Esophagus muscularis mucosa (tissue), 4 donors: ENCODE measurements at regions of chr22 and their contacts with region 1.

Region 1: DNA sequence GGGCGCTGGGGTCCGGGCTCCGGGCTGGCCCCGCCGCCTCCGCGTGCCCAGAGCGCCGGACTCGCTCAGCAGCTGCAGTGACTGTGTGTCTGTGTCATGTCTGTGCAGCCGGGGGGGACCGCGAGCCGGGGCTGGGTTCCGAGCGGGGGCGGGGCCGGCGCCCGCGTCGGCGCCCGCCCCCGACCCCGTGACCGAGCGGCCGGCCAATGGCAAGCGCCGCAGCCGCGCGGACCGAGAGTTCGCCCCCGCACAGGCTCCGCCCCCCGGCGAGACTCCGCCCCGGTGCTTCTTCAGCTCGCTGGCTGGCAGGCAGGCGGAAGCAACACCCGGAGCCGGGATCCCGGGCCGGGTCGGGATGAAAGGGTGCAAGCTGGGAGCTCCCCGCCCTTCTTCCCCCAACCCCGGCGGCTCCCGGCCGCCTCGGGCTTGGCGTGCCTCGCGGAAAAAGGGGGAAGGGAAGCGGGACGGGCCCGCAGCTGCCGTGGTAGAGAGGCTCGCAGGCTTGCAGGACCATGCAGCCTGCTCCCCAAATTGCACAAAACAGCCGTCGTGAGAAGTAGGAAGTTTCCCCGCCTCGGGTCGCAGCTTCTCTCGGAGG is 750 bp upstream of the LARGE1 start:
- DNase-seq: peak; percentile 99
- H3K4me3 ChIP-seq: peak overlapping the region; percentile 70 to 95 (median 85)
- H3K27ac ChIP-seq: peak overlapping the region; percentile 88 to 92 (median 90)
- H3K4me1 ChIP-seq: peaks cover 25 to 53% (median 42%) of the 10 kb centered on the region in 4 donors
- H3K27me3 ChIP-seq: no peaks in the 10 kb centered on the region
- CTCF ChIP-seq: no peak
- EP300 ChIP-seq: no peak
- POLR2A ChIP-seq: no peak

Region 2: DNA sequence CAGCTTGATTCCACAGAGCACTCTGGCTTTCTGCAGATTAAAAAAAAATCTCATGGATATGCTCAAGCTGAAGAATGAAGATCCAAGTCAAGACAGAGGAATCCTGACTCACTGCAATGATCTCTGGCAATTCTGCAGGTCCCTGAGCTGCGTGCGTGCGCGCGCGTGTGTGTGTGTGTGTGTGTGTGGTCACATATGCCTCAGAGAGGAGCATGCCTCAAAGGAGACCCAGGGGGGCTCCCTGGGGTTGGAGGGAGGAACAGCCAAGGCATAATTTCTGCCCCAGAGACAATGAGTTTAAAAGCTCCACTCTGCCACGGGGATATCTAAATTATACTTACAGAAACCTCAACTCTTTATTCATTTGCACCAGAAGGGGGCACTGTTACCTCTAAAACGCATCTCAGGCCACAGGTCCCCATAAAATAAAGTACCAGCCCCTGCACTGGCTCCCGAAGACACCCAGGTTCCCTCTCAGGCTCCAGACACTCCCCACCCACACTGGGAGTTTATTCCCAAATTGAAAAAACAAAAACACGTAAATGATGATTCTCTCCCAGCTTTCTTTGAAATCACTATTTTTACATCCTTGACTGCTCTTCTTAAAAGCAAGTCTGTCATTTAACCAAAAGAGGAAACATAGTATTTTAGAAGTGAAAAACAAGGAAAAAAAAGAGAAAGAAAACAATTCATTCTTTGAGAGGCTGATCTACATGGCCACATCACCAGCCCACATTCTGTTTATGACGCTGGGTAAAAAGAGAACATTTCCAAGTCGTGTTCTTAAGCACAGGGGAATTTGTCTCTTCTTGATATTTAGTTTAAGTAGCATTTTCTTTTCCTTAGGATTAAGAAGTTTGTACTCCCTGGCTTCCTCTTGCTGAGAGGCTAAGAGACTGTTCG is 401.7 kb before region 1 on chr22:
- intact Hi-C with region 1: loop called (anchors 5 kb)
- DNase-seq: no peak
- H3K4me3 ChIP-seq: no peak overlapping the region
- H3K27ac ChIP-seq: no peak overlapping the region
- H3K4me1 ChIP-seq: peaks cover 11 to 16% (median 12%) of the 10 kb centered on the region in 4 donors
- H3K27me3 ChIP-seq: no peaks in the 10 kb centered on the region
- CTCF ChIP-seq: peak; percentile 61 to 63 (median 62)
- EP300 ChIP-seq: no peak
- POLR2A ChIP-seq: no peak

Region 3: GRCh38 chr22:33726294-33726734 is 194.7 kb before region 1 on chr22:
- intact Hi-C with region 1: loop called (anchors 10 kb)
- DNase-seq: no peak
- H3K4me3 ChIP-seq: no peak overlapping the region
- H3K27ac ChIP-seq: peak overlapping the region; percentile 47 to 68 (median 65)
- H3K4me1 ChIP-seq: peaks cover 24 to 35% (median 30%) of the 10 kb centered on the region in 4 donors
- H3K27me3 ChIP-seq: no peaks in the 10 kb centered on the region
- CTCF ChIP-seq: no peak
- EP300 ChIP-seq: peak; percentile 35
- POLR2A ChIP-seq: no peak

Region 4: DNA sequence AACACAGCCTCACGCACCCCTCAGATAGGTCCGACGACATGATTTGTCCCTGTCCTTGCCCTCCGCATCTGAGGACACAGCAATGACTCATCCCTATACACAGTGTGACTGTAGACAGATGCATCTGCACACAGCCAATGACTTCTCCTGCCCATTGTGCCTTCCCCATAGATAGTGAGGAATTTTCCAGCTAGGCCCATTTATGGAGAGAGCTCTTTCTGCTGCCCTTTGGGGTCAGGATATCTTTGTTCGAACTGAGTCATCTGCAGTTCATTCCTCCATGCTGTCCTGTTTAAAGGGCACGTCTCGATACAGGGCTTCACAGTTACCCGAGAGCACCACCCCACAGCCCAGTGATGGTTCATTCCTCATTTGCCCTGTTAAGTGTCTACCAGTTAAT is 97.5 kb before region 1 on chr22:
- intact Hi-C with region 1: loop called (anchors 5 kb)
- DNase-seq: no peak
- H3K4me3 ChIP-seq: no peak overlapping the region
- H3K27ac ChIP-seq: no peak overlapping the region
- H3K4me1 ChIP-seq: peaks cover 24 to 60% (median 57%) of the 10 kb centered on the region in 4 donors
- H3K27me3 ChIP-seq: no peaks in the 10 kb centered on the region
- CTCF ChIP-seq: no peak
- EP300 ChIP-seq: no peak
- POLR2A ChIP-seq: no peak

Region 5: GRCh38 chr22:34105461-34106062 is 184.5 kb after region 1 on chr22:
- intact Hi-C with region 1: loop called (anchors 2 kb)
- DNase-seq: peak; percentile 89
- H3K4me3 ChIP-seq: no peak overlapping the region
- H3K27ac ChIP-seq: no peak overlapping the region
- H3K4me1 ChIP-seq: peaks cover 0 to 7% (median 0%) of the 10 kb centered on the region in 4 donors
- H3K27me3 ChIP-seq: peaks cover 0 to 30% (median 0%) of the 10 kb centered on the region in 4 donors
- CTCF ChIP-seq: peak; percentile 68 to 80 (median 68)
- EP300 ChIP-seq: no peak
- POLR2A ChIP-seq: no peak